ENCODE measurements at regions of chr15 and their contacts with region 1.

Region 1: GRCh38 chr15:30991255-30992072 is at the start of gene MTMR10:
- DNase-seq: peak; percentile 79
- H3K4me3 ChIP-seq: peak within 1 kb of the TSS; percentile 78 to 97 (median 93)
- H3K27ac ChIP-seq: peak within 1 kb of the TSS; percentile 92 to 96 (median 94)
- H3K4me1 ChIP-seq: peaks cover 0 to 40% (median 30%) of the 10 kb centered on the region in 4 donors
- H3K27me3 ChIP-seq: no peaks in the 10 kb centered on the region
- CTCF ChIP-seq: no peak
- EP300 ChIP-seq: no peak
- POLR2A ChIP-seq: peak; percentile 17 to 60
- total RNA-seq, gene MTMR10: 24.3 to 31.0 (median 27.9) TPM

Region 2: DNA sequence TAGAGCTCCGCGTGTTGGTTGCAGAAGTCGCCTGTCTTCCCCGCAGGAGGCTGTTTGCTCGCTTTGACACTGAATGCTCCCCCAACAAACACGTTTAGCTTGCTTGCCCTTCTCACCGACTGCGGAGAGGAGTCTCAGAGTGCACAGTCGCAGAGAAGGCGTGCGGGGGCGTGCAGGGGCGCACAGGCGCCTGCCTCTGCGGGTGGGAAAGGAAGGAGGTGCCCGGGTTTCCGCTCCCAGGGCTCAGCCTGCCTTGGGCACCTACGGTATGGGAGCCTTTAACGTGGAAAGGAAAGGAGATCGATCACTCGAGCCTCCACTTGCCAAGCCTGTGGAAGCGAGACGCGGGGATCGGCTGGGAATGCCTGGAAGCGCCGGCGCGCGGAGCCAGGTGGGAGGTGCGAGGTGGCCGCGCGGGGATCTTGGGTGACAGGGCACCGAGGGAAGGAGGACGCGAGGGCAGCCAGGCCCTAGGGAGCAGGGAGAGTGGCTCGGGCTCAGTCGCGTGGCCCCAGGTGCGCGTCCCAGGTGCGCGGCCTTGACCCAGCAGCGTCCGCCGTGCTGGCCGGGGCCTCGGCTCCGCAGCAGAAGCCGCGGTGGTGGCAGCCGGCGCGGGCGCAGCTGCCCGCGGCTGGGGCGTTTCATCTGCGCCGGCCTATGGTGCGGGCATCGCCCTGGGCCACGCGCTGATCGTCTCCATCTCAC is 87.8 kb before region 1 on chr15 and contains the start of gene FAN1:
- intact Hi-C with region 1: loop called (anchors 2 kb)
- DNase-seq: peak; percentile 91
- H3K4me3 ChIP-seq: peak within 1 kb of the TSS; percentile 48 to 84 (median 74)
- H3K27ac ChIP-seq: peak within 1 kb of the TSS; percentile 79 to 84 (median 80)
- H3K4me1 ChIP-seq: peaks cover 0 to 30% (median 13%) of the 10 kb centered on the region in 4 donors
- H3K27me3 ChIP-seq: no peaks in the 10 kb centered on the region
- CTCF ChIP-seq: no peak
- EP300 ChIP-seq: no peak
- POLR2A ChIP-seq: no peak
- total RNA-seq, gene FAN1: 17.8 to 20.8 (median 20.0) TPM

Region 3: DNA sequence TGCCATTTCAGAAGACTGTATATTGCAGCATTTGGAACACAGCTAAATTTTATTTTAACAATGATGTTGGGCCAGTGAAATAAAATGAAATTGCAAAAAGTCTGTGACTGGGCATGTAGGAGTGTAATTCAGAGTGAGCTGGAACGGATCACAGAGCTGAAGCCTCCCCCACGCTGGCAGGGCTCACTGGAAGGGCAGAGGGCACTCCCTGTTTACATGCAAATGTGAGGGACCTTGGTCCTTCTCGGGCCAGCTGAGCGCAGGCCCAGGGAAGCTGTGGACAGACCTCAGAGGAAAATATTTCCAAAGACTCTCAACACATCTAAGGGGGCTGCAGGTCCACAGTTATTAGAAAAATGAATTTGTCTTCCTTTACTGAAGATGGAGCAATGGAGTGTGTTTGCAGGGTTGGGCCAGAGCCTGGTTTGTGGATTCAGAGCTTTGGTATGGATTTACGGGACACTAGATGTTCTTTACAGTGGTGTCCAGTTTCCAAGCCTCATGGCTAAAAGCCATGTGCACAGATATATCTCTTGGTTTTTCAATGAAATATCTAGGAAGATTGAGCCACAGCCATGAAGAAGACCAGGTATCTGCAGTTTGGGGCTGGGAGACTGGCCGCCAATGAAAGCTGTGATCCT is 78.0 kb after region 1 on chr15:
- intact Hi-C with region 1: loop called (anchors 5 kb)
- DNase-seq: no peak
- H3K4me3 ChIP-seq: no peak overlapping the region
- H3K27ac ChIP-seq: peak overlapping the region in 1 of 4 donors; percentile 31
- H3K4me1 ChIP-seq: peaks cover 0 to 18% (median 10%) of the 10 kb centered on the region in 4 donors
- H3K27me3 ChIP-seq: no peaks in the 10 kb centered on the region
- CTCF ChIP-seq: no peak
- EP300 ChIP-seq: no peak
- POLR2A ChIP-seq: no peak

Region 4: DNA sequence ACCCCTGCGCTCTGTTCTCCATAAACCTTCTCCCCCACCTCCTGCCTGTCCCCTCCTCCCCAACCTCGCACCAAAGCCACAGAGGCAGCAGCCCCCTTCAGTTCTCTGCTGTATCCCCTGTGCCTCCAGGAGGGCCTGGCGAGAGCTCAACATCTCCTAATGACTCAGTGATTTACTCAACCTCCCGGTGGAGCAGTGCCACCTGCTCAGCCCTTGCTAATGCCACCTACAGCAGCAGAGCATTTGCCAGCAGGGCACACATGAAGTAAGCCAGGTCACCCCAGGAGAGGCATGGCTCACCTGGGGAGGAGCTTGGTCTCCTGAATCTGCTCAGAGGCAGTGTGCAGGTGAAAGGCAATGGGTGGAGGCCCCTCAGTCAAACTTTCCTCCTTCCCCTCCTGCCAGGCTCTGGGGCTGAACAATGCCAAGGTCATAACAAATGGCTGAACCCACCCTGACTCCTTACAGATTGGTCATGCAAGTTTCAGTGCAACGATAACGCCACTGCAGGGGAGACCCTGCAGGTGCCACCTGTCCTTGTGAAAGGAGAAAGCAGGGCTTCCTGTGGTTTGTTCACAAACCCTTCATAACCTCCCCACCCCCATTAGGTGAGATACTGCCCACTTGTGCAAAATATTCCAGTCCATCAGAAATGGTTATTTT is 90.3 kb after region 1 on chr15:
- intact Hi-C with region 1: no loop called
- DNase-seq: no peak
- H3K4me3 ChIP-seq: no peak overlapping the region
- H3K27ac ChIP-seq: no peak overlapping the region
- H3K4me1 ChIP-seq: no peaks in the 10 kb centered on the region
- H3K27me3 ChIP-seq: peaks cover 0 to 13% (median 0%) of the 10 kb centered on the region in 3 donors
- CTCF ChIP-seq: no peak
- EP300 ChIP-seq: no peak
- POLR2A ChIP-seq: no peak

Region 5: DNA sequence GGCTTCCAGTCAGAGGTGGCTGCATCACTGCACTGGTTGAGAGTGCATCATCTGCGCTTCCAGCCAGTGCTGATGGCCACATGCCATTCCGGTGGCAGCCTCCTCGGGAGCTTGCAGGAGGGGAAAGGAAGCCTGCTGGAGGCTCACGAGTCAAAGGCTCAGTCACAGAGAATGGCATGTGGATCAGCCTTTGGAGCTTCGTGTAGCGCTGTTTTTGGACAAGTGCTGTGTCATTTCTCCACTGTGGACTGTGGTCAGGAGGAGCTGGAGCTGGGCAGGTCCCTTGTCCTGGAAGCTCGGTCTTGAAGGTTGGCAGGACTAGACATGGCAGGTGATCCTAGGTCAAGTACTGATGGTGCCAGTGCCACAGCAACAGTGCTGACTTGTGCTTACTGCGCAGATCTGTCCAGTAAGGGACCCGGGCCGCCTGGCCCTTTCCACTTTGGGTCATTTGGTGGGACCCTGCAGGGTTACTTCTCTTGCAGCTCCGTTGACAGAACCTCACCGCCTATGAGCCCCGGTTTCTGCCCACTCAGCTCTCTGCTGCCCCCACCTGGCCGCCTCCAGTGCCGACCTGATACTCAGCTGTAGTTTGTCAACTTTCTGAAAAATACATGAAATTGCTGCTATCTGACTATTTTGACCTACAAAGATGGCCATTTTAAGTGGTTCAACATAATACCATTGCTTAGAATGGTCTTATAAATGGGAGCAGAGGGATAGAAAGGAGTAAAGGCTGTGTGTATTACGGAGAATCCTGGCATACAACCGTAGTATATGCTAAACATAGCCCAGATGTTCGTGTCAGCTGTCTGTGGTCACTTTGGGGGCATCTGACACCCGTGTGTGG is 137.7 kb after region 1 on chr15:
- intact Hi-C with region 1: loop called (anchors 5 kb)
- DNase-seq: peak; percentile 82
- H3K4me3 ChIP-seq: no peak overlapping the region
- H3K27ac ChIP-seq: no peak overlapping the region
- H3K4me1 ChIP-seq: peaks cover 0 to 5% (median 0%) of the 10 kb centered on the region in 4 donors
- H3K27me3 ChIP-seq: peaks cover 0 to 10% (median 0%) of the 10 kb centered on the region in 3 donors
- CTCF ChIP-seq: peak; percentile 21 to 92 (median 78)
- EP300 ChIP-seq: no peak
- POLR2A ChIP-seq: no peak

Region 6: DNA sequence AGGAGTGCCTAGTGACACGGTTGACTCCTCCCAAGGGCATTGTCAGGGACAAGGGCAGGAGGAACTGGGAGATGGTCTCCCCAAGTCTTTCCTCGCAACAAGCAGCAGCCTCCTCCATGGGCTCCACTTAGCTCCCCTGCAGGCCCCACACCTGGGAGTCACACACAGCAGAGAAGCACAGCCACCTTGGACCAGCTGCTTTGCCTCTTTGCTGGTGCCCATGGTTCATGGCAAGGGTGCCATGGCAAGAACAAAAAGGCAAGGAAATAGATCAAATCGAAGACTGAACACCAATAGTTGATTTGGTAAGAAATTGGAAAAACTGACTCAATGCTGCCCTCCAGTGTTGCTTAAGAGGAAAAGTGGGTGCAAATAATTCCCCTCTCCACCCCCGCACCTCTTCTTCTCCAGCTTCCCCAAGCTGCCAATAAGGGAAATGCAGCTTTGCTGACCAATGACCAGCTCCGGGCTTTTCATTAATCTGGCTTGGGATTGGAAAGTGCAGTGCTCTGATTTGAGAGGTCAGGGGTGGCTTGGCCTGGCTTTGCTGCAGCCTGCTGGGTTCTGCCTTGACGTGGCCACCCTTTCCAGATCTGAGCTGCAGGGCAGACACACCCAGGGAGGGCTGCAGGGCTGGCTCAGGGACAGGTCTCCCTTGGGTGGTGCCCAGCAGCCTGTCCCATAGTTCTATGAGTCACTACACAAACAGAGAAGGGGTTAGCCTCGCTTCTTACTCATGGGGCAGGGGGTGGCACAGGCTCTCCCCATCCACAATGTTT is 497.2 kb after region 1 on chr15:
- intact Hi-C with region 1: loop called (anchors 5 kb)
- DNase-seq: peak; percentile 87
- H3K4me3 ChIP-seq: no peak overlapping the region
- H3K27ac ChIP-seq: peak overlapping the region in 3 of 4 donors; percentile 26 to 60 (median 45)
- H3K4me1 ChIP-seq: peaks cover 0 to 20% (median 16%) of the 10 kb centered on the region in 4 donors
- H3K27me3 ChIP-seq: peaks cover 0 to 18% (median 5%) of the 10 kb centered on the region in 3 donors
- CTCF ChIP-seq: peak; percentile 77 to 95 (median 84)
- EP300 ChIP-seq: no peak
- POLR2A ChIP-seq: no peak